ENCODE measurements at regions of chrX and their contacts with region 1.

Region 1: GRCh38 chrX:9530848-9531274 is 66.0 kb downstream of the TBL1X start:
- DNase-seq: peak; percentile 24 to 81 (median 55)
- ATAC-seq: peak; percentile 93
- H3K4me3 ChIP-seq: no peak overlapping the region
- H3K4me3 Mint-ChIP-seq: peak overlapping the region; percentile 60
- H3K27ac ChIP-seq: no peak overlapping the region
- H3K27ac Mint-ChIP-seq: peak overlapping the region; percentile 60
- H3K4me1 ChIP-seq: peaks cover 25% of the 10 kb centered on the region
- H3K4me1 Mint-ChIP-seq: peaks cover 56% of the 10 kb centered on the region
- H3K27me3 ChIP-seq: no peaks in the 10 kb centered on the region
- H3K27me3 Mint-ChIP-seq: no peaks in the 10 kb centered on the region
- CTCF ChIP-seq: no peak

Region 2: GRCh38 chrX:8374041-8374825 is 1156.6 kb before region 1 on chrX:
- CTCF ChIA-PET with region 1: no interaction called
- POLR2A ChIA-PET with region 1: no interaction called
- intact Hi-C with region 1: no loop called
- DNase-seq: no peak
- ATAC-seq: no peak
- H3K4me3 ChIP-seq: no peak overlapping the region
- H3K4me3 Mint-ChIP-seq: no peak overlapping the region
- H3K27ac ChIP-seq: no peak overlapping the region
- H3K27ac Mint-ChIP-seq: no peak overlapping the region
- H3K4me1 ChIP-seq: no peaks in the 10 kb centered on the region
- H3K4me1 Mint-ChIP-seq: no peaks in the 10 kb centered on the region
- H3K27me3 ChIP-seq: no peaks in the 10 kb centered on the region
- H3K27me3 Mint-ChIP-seq: no peaks in the 10 kb centered on the region
- CTCF ChIP-seq: no peak

Region 3: GRCh38 chrX:9644335-9644734 is 113.5 kb after region 1 on chrX:
- CTCF ChIA-PET with region 1: no interaction called
- POLR2A ChIA-PET with region 1: no interaction called
- intact Hi-C with region 1: loop called in 1 of 2 experiments (anchors 10 kb)
- DNase-seq: peak in 7 of 9 experiments; percentile 1 to 85 (median 45)
- ATAC-seq: peak; percentile 90
- H3K4me3 ChIP-seq: no peak overlapping the region
- H3K4me3 Mint-ChIP-seq: no peak overlapping the region
- H3K27ac ChIP-seq: no peak overlapping the region
- H3K27ac Mint-ChIP-seq: peak overlapping the region; percentile 55
- H3K4me1 ChIP-seq: peaks cover 26% of the 10 kb centered on the region
- H3K4me1 Mint-ChIP-seq: peaks cover 28% of the 10 kb centered on the region
- H3K27me3 ChIP-seq: no peaks in the 10 kb centered on the region
- H3K27me3 Mint-ChIP-seq: no peaks in the 10 kb centered on the region
- CTCF ChIP-seq: no peak

Region 4: GRCh38 chrX:10119399-10119990 is 588.6 kb after region 1 on chrX:
- CTCF ChIA-PET with region 1: no interaction called
- POLR2A ChIA-PET with region 1: no interaction called
- intact Hi-C with region 1: no loop called
- DNase-seq: peak; percentile 43 to 90 (median 67)
- ATAC-seq: peak; percentile 72
- H3K4me3 ChIP-seq: no peak overlapping the region
- H3K4me3 Mint-ChIP-seq: no peak overlapping the region
- H3K27ac ChIP-seq: peak overlapping the region in 1 of 2 experiments; percentile 36
- H3K27ac Mint-ChIP-seq: peak overlapping the region; percentile 34
- H3K4me1 ChIP-seq: no peaks in the 10 kb centered on the region
- H3K4me1 Mint-ChIP-seq: peaks cover 25% of the 10 kb centered on the region
- H3K27me3 ChIP-seq: no peaks in the 10 kb centered on the region
- H3K27me3 Mint-ChIP-seq: no peaks in the 10 kb centered on the region
- CTCF ChIP-seq: peak; percentile 99

Measured in CD8-positive, alpha-beta T cell (primary cell).